CD4-positive, alpha-beta T cell (primary cell): ENCODE measurements at regions of chr20 and their contacts with region 1.

Region 1: GRCh38 chr20:31849455-31849925 is 4.1 kb upstream of the FOXS1 start:
- DNase-seq: no peak
- ATAC-seq: no peak
- H3K4me3 ChIP-seq: no peak overlapping the region
- H3K4me3 Mint-ChIP-seq: no peak overlapping the region
- H3K27ac ChIP-seq: no peak overlapping the region
- H3K27ac Mint-ChIP-seq: no peak overlapping the region
- H3K4me1 ChIP-seq: peaks cover 7% of the 10 kb centered on the region
- H3K4me1 Mint-ChIP-seq: no peaks in the 10 kb centered on the region
- H3K27me3 ChIP-seq: peaks cover 8 to 14% of the 10 kb centered on the region in 2 experiments
- H3K27me3 Mint-ChIP-seq: peaks cover 32% of the 10 kb centered on the region
- CTCF ChIP-seq: no peak

Region 2: GRCh38 chr20:31760519-31761240 is 88.8 kb before region 1 on chr20:
- CTCF ChIA-PET with region 1: no interaction called
- POLR2A ChIA-PET with region 1: no interaction called
- intact Hi-C with region 1: no loop called
- DNase-seq: no peak
- ATAC-seq: no peak
- H3K4me3 ChIP-seq: no peak overlapping the region
- H3K4me3 Mint-ChIP-seq: no peak overlapping the region
- H3K27ac ChIP-seq: no peak overlapping the region
- H3K27ac Mint-ChIP-seq: no peak overlapping the region
- H3K4me1 ChIP-seq: no peaks in the 10 kb centered on the region
- H3K4me1 Mint-ChIP-seq: no peaks in the 10 kb centered on the region
- H3K27me3 ChIP-seq: no peaks in the 10 kb centered on the region
- H3K27me3 Mint-ChIP-seq: no peaks in the 10 kb centered on the region
- CTCF ChIP-seq: no peak

Region 3: DNA sequence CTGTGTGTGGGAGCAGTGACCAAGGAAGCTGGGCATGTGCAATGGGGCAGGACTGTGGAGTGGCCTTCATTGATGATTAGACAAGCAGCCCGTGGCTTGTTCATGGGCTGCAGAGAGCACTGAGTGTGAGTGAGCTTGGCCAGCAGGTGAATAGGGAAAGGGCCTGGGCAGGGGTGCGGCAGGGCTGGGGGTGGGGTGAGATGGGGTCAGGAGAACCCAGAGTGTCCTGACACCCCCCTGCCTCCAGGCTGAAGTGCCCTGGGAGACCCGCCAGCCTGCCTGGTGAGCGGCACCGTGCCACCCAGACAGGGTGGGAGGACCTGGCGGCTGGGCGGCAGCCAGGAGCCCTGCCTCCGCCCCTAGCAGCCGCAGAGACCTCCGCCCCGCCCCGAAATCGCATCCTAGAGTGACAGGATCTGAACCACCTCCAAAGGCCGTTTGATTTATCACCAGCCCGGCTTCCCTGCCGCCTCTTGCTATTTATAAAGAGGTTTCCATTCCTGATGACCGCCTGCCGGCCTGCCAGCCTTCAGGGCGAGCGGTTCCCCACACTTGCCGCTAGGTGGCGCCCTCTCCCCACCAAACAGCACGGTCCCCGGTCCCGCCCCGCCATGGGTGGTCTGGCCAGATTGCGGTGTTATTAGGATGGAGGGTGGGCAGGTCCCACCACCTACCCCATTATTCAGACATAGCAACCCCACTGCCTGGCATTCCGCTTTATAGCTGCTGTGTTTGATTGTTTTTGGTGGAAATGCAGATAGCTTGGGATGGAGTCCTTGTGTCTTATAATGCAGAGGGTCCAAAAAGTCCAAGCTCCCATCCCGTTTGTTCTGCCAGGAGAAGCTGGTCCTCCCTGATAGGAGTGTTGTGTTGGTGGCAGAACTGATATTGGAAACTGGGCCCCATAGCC is 26.8 kb before region 1 on chr20:
- CTCF ChIA-PET with region 1: interaction called, 3 read pairs
- POLR2A ChIA-PET with region 1: no interaction called
- intact Hi-C with region 1: loop called in 1 of 2 experiments (anchors 2 kb)
- DNase-seq: peak; percentile 60 to 86 (median 68)
- ATAC-seq: peak; percentile 86
- H3K4me3 ChIP-seq: peak overlapping the region; percentile 5
- H3K4me3 Mint-ChIP-seq: no peak overlapping the region
- H3K27ac ChIP-seq: no peak overlapping the region
- H3K27ac Mint-ChIP-seq: no peak overlapping the region
- H3K4me1 ChIP-seq: peaks cover 10% of the 10 kb centered on the region
- H3K4me1 Mint-ChIP-seq: no peaks in the 10 kb centered on the region
- H3K27me3 ChIP-seq: peaks cover 0 to 3% of the 10 kb centered on the region in 2 experiments
- H3K27me3 Mint-ChIP-seq: no peaks in the 10 kb centered on the region
- CTCF ChIP-seq: peak; percentile 99

Region 4: DNA sequence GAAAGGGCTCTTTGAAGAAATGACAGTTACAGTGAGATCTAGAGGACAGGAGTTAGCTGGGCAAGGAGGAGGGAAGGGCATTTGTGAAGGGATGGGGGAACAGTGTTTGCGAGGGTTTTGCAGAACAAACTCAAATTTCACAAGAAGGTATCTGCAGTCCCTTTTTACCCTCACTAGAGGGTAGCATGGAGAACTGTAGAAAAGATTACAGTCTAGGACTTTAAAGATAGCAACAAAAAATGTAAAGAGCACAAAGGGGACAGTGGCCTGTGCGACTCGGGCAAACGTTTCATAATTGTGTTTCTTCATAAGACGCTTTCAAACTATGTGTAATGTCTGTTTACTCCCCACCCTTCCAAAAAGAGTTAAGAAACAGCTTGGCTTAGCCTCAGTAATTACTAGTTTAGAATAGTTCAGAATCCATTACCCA is 487.4 kb after region 1 on chr20:
- CTCF ChIA-PET with region 1: no interaction called
- POLR2A ChIA-PET with region 1: no interaction called
- intact Hi-C with region 1: no loop called
- DNase-seq: peak in 3 of 14 experiments; percentile 35 to 53 (median 53)
- ATAC-seq: peak; percentile 73
- H3K4me3 ChIP-seq: no peak overlapping the region
- H3K4me3 Mint-ChIP-seq: no peak overlapping the region
- H3K27ac ChIP-seq: no peak overlapping the region
- H3K27ac Mint-ChIP-seq: peak overlapping the region; percentile 1
- H3K4me1 ChIP-seq: peaks cover 26% of the 10 kb centered on the region
- H3K4me1 Mint-ChIP-seq: peaks cover 22% of the 10 kb centered on the region
- H3K27me3 ChIP-seq: no peaks in the 10 kb centered on the region
- H3K27me3 Mint-ChIP-seq: no peaks in the 10 kb centered on the region
- CTCF ChIP-seq: peak; percentile 64